ENCODE measurements at regions of chr17 and their contacts with region 1.

Region 1: DNA sequence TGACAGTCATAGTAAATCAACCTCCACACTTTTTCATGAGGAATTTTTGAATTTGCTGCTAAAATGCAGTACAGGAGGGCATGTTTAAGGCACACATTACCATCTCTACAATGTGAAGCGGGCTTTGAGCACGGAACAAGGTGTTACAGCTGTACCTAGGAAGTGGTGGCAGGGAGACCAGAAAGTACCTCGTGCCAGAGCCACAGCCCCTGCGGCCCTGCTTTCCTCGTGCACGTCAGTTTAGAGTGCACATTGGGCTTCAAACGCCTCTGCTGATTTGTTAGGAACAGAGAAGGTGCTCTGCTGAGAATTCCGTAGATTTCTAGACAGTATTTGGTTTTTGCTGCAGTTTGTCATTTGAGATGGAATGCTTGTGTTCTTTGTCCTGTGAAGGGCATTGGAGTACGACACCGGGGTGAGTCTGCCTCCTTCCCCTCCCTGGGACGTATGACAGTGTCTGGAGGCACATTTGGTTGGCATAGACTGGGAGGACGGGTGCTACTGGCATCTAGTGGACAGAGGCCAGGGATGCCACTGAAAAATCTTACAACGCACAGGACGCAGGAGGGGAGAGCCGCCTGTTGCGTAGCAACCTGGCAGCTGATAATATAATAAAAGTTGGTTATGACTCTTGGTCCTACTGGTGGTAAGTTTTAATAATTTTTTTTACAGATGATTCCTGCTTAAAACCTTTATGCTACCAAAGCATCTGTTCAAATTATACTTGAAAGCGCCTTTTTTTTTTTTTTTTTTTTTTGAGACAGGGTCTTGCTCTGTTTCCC is 9.1 kb downstream of the FOXK2 start:
- DNase-seq: no peak
- ATAC-seq: peak; percentile 93

Region 2: GRCh38 chr17:82440991-82441627 is 87.6 kb before region 1 on chr17:
- intact Hi-C with region 1: no loop called
- DNase-seq: no peak
- ATAC-seq: peak; percentile 27

Region 3: DNA sequence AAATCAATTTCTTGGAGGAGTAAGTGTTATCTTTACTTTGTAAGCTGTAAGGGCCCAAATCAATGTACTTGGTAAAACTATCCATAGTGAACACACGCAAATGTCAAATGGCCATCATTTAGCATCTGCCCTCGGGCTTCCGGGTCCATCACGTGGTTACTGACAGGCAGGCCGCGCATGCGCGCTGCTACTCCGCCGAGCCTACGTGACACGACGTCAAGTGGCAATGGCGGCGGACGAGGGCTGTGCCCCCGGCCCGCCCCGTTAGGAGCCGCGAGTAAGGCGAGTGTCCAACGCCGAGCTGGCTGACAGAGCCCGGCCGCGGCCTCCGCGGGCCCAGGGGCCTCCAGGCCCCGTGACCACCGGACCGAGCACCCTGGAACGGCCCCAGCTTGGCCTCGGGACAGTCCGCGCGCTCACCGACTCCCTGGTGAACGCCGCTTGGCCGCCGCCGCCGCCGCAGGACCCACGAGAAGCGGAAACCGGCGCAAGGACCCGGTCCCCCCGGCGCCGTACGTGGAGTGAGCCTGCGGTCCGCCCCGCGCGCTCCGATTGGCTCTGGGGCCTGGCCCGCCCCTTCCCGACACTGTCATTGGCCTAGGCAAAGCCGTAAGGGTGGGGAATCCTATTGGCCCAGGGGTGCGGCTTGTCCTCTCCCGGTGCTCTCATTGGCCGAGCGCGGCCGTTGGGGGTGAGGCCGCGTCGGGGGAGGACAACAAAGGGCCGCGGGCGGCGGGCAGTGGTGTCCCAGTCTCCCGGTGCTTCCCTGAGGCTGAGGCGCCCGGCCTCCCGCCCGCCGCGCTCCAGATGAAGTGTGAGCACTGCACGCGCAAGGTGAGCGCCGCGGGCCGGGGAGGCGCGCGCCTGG is 70.4 kb before region 1 on chr17 and contains the start of gene NARF:
- intact Hi-C with region 1: loop called (anchors 1 kb)
- DNase-seq: peak; percentile 99
- ATAC-seq: peak; percentile 99
- total RNA-seq, gene NARF: 72.7 TPM

Measured in Right ventricle myocardium inferior (tissue), 1 donor.